B cell (primary cell): ENCODE measurements at regions of chr18 and their contacts with region 1.

Region 1: GRCh38 chr18:13558124-13558523 is 168.2 kb downstream of the FAM210A start:
- DNase-seq: peak; percentile 84
- ATAC-seq: peak; percentile 65
- H3K4me3 ChIP-seq: no peak overlapping the region
- H3K4me3 Mint-ChIP-seq: peak overlapping the region; percentile 48
- H3K27ac ChIP-seq: no peak overlapping the region
- H3K27ac Mint-ChIP-seq: peak overlapping the region; percentile 71
- H3K4me1 ChIP-seq: peaks cover 19 to 24% of the 10 kb centered on the region in 2 donors
- H3K4me1 Mint-ChIP-seq: peaks cover 29% of the 10 kb centered on the region
- H3K27me3 ChIP-seq: no peaks in the 10 kb centered on the region
- H3K27me3 Mint-ChIP-seq: no peaks in the 10 kb centered on the region
- CTCF ChIP-seq: peak; percentile 77

Region 2: DNA sequence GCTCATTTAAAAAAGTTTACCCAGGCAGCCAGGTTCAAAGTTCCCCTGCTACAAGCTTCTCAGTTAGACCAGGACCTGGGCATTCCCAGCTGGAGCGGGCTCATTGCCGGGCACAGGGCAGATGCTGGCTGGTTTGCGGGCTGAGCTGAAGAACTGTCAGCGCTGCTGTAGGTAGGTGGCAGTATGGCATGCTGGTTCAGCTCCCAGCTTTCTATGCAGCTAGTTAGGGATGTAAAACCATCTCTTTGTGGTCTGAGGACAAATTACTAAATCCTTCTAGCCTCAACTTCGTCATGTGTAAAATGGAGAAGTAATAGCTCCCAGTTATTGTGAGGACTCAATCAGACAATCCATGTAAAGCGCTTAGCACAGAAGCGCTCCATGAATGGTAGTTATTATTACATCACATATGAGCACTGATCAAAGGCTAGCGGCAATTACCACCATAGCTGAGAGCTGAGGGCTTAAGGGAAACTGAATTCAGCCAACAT is 342.0 kb before region 1 on chr18:
- CTCF ChIA-PET with region 1: interaction called, 22 read pairs
- POLR2A ChIA-PET with region 1: no interaction called
- intact Hi-C with region 1: no loop called
- DNase-seq: peak; percentile 69
- ATAC-seq: peak; percentile 39
- H3K4me3 ChIP-seq: no peak overlapping the region
- H3K4me3 Mint-ChIP-seq: peak overlapping the region; percentile 93
- H3K27ac ChIP-seq: no peak overlapping the region
- H3K27ac Mint-ChIP-seq: peak overlapping the region; percentile 27
- H3K4me1 ChIP-seq: peaks cover 20 to 24% of the 10 kb centered on the region in 2 donors
- H3K4me1 Mint-ChIP-seq: peaks cover 19% of the 10 kb centered on the region
- H3K27me3 ChIP-seq: peaks cover 0 to 52% (median 21%) of the 10 kb centered on the region in 4 experiments
- H3K27me3 Mint-ChIP-seq: peaks cover 60% of the 10 kb centered on the region
- CTCF ChIP-seq: peak; percentile 43

Region 3: GRCh38 chr18:13577091-13577697 is 19.1 kb after region 1 on chr18:
- CTCF ChIA-PET with region 1: interaction called, 31 read pairs
- POLR2A ChIA-PET with region 1: interaction called, 10 read pairs
- intact Hi-C with region 1: loop called (anchors 1 kb)
- DNase-seq: peak; percentile 73
- ATAC-seq: peak; percentile 87
- H3K4me3 ChIP-seq: peak overlapping the region in 4 of 5 experiments; percentile 28 to 66 (median 47)
- H3K4me3 Mint-ChIP-seq: peak overlapping the region; percentile 73
- H3K27ac ChIP-seq: peak overlapping the region; percentile 51 to 58
- H3K27ac Mint-ChIP-seq: peak overlapping the region; percentile 76
- H3K4me1 ChIP-seq: peaks cover 29 to 39% of the 10 kb centered on the region in 2 donors
- H3K4me1 Mint-ChIP-seq: peaks cover 45% of the 10 kb centered on the region
- H3K27me3 ChIP-seq: no peaks in the 10 kb centered on the region
- H3K27me3 Mint-ChIP-seq: no peaks in the 10 kb centered on the region
- CTCF ChIP-seq: no peak

Region 4: DNA sequence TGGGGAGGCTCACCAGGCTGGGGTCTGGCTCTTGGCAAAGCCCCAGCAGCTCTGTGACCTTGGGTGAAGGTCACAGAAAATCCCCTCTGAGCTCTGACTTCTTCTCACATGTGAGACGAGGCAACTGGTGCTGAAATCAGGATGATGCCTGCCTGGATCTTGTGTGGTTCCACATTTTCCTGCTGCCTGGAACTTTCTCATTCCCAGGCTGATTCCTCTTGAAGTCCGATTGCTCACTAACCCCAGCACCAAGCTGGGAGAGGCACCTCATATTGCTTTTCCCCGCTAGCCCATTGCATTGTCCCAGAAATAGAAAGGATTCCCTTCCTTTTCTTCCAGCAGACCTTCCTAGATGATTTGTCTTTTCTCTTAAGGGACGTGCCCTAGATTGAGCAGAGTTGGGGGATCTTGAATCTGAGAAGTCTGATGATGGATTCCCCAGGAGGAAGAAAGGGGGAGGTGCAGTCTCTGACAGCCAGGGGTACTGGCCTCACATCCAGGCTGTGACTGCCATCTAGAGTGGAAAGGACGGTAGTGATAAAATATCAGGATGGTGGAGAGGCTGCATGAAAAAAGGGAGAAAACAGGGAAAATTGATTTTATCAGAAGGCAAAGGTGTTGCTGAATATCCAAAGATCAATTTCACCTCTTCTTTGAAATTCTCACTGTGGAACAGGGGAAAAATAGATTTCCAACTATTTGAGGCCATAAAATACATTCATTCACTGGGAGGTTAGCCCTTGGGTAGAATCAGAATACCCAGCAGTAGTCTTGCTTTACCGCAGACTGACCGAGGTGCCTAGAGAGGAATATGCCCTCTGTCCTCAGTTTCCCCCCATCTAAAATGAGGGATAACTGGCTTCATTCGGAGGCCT is 72.0 kb after region 1 on chr18:
- CTCF ChIA-PET with region 1: interaction called, 344 read pairs
- POLR2A ChIA-PET with region 1: no interaction called
- intact Hi-C with region 1: loop called (anchors 1 kb)
- DNase-seq: peak; percentile 82
- ATAC-seq: peak; percentile 95
- H3K4me3 ChIP-seq: no peak overlapping the region
- H3K4me3 Mint-ChIP-seq: peak overlapping the region; percentile 55
- H3K27ac ChIP-seq: no peak overlapping the region
- H3K27ac Mint-ChIP-seq: peak overlapping the region; percentile 42
- H3K4me1 ChIP-seq: peaks cover 5 to 6% of the 10 kb centered on the region in 2 donors
- H3K4me1 Mint-ChIP-seq: peaks cover 18% of the 10 kb centered on the region
- H3K27me3 ChIP-seq: no peaks in the 10 kb centered on the region
- H3K27me3 Mint-ChIP-seq: no peaks in the 10 kb centered on the region
- CTCF ChIP-seq: peak; percentile 95

Region 5: DNA sequence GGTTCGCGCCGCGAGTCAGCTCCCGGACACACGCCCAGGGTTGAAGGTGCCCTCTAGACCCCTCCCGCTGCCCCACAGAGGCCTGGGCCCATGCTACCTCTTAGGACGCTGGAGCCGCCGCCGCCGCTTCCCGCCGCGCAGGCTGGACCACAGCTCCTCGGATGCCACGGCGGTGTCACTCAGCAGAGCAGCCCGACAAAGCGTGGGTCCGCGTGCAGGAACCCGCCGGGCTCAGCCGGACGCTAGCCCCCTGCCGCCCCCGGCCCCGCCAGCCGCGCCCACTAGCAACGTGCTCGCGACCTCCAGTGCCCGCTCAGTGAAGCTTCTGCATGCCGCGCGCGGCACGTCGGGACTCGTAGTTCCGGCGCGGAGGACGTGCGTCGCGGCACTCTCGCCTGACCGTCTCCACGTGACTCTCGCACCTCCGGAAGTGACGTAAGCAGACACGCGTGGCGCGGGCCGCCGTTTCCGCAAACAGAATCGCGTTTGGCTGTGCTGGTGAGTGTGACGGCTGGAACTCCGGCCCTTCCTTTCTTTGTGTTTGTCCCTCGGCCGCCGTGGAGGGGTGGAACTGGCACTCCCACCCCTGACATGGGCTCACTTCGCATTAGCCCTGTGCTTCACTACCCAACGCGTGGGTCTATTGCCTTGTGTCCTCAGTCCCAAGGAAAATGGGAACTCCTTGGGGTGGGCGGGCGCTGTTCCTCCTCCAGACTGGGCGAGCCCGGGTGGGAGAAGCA is 168.3 kb after region 1 on chr18 and contains the starts of genes FAM210A and RNMT:
- CTCF ChIA-PET with region 1: interaction called, 12 read pairs
- POLR2A ChIA-PET with region 1: interaction called, 4 read pairs
- intact Hi-C with region 1: loop called (anchors 2 kb)
- DNase-seq: peak; percentile 97
- ATAC-seq: peak; percentile 95
- H3K4me3 ChIP-seq: peak within 1 kb of the TSS; percentile 51 to 94 (median 88)
- H3K4me3 Mint-ChIP-seq: peak within 1 kb of the TSS; percentile 97
- H3K27ac ChIP-seq: peak within 1 kb of the TSS; percentile 83 to 94
- H3K27ac Mint-ChIP-seq: peak within 1 kb of the TSS; percentile 98
- H3K4me1 ChIP-seq: peaks cover 21 to 26% of the 10 kb centered on the region in 2 donors
- H3K4me1 Mint-ChIP-seq: peaks cover 48% of the 10 kb centered on the region
- H3K27me3 ChIP-seq: no peaks in the 10 kb centered on the region
- H3K27me3 Mint-ChIP-seq: no peaks in the 10 kb centered on the region
- CTCF ChIP-seq: peak; percentile 18
- total RNA-seq, gene FAM210A: 11.4 and 12.3 TPM in 2 replicates
- total RNA-seq, gene RNMT: 54.3 and 57.8 TPM in 2 replicates